Activated B cell treated with CpG ODN at 0.5 μM for 24 hours (primary cell): ENCODE measurements at regions of chr19 and their contacts with region 1.

Region 1: GRCh38 chr19:769616-770015 is 18.7 kb downstream of the MISP start:
- DNase-seq: no peak
- ATAC-seq: no peak
- H3K4me3 Mint-ChIP-seq: no peak overlapping the region
- H3K27ac Mint-ChIP-seq: no peak overlapping the region
- H3K4me1 Mint-ChIP-seq: peaks cover 3% of the 10 kb centered on the region
- H3K27me3 Mint-ChIP-seq: peaks cover 11% of the 10 kb centered on the region
- CTCF ChIP-seq: no peak

Region 2: DNA sequence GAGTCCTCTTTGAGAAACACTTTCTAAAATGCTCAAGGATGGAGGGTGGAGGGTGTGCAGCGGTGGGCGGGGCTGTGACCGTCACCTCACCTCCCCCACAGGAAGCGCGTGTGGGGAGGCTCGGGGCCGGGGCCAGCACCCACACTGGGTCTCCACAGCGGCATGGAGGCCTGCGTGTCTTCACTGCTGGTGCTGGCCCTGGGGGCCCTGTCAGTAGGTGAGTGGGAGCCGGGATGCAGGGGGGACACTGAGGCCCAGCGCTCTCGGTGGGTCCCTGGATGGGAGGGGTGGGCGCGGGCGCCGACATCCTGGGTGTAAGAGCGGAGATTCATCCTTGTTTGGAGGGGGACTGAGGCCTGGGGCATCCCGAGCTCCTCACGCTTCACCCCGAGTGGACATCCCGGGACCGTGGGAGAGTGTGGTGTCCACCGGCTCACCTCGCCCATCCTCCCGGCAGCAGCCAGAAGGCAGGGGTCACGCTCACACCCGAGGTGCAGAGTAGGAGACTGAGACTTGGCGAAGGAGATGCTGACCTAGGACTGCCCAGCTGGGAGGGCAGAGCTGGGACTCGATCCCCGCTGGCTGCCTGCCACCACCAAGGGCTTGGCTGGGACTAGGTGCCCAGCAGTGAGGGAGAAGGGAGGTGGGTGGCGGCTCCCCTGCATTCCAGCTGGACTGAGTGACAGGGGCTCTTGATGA is 225.6 kb before region 1 on chr19 and contains the start of gene GZMM:
- CTCF ChIA-PET with region 1: no interaction called
- POLR2A ChIA-PET with region 1: no interaction called
- intact Hi-C with region 1: no loop called
- DNase-seq: no peak
- ATAC-seq: no peak
- H3K4me3 Mint-ChIP-seq: no peak within 1 kb of the TSS
- H3K27ac Mint-ChIP-seq: no peak within 1 kb of the TSS
- H3K4me1 Mint-ChIP-seq: peaks cover 4% of the 10 kb centered on the region
- H3K27me3 Mint-ChIP-seq: no peaks in the 10 kb centered on the region
- CTCF ChIP-seq: no peak
- total RNA-seq, gene GZMM: 0.22 TPM in 1 of 2 replicates, not detected in the other

Region 3: GRCh38 chr19:718991-719512 is 50.6 kb before region 1 on chr19:
- CTCF ChIA-PET with region 1: no interaction called
- POLR2A ChIA-PET with region 1: no interaction called
- intact Hi-C with region 1: no loop called
- DNase-seq: no peak
- ATAC-seq: no peak
- H3K4me3 Mint-ChIP-seq: no peak overlapping the region
- H3K27ac Mint-ChIP-seq: no peak overlapping the region
- H3K4me1 Mint-ChIP-seq: peaks cover 10% of the 10 kb centered on the region
- H3K27me3 Mint-ChIP-seq: peaks cover 22% of the 10 kb centered on the region
- CTCF ChIP-seq: no peak

Region 4: GRCh38 chr19:913080-913748 is 143.6 kb after region 1 on chr19 and contains the start of gene R3HDM4:
- CTCF ChIA-PET with region 1: no interaction called
- POLR2A ChIA-PET with region 1: interaction called, 14 read pairs
- intact Hi-C with region 1: no loop called
- DNase-seq: peak; percentile 85
- ATAC-seq: peak; percentile 50
- H3K4me3 Mint-ChIP-seq: peak within 1 kb of the TSS; percentile 89
- H3K27ac Mint-ChIP-seq: peak within 1 kb of the TSS; percentile 86
- H3K4me1 Mint-ChIP-seq: peaks cover 36% of the 10 kb centered on the region
- H3K27me3 Mint-ChIP-seq: no peaks in the 10 kb centered on the region
- CTCF ChIP-seq: no peak
- total RNA-seq, gene R3HDM4: 174 and 189 TPM in 2 replicates

Region 5: DNA sequence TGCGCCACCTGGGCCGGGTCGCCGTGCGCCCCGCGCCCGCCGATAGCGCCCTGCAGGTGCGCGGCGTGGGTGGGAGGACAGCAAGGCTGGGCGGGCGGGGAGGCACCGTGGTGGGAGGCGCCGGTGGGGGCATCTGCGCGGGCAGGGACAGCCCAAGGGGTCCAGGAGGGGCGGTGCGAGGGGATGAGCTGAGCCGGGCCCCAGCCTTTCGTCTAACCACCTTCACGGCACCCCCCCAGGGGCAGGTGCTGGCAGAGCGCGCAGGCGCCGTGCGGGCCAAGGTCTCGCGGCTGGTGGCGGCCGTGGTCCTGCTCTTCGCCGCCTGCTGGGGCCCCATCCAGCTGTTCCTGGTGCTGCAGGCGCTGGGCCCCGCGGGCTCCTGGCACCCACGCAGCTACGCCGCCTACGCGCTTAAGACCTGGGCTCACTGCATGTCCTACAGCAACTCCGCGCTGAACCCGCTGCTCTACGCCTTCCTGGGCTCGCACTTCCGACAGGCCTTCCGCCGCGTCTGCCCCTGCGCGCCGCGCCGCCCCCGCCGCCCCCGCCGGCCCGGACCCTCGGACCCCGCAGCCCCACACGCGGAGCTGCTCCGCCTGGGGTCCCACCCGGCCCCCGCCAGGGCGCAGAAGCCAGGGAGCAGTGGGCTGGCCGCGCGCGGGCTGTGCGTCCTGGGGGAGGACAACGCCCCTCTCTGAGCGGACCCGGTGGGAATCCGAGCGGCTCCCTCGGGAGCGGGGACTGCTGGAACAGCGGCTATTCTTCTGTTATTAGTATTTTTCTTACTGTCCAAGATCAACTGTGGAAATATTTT is 150.6 kb after region 1 on chr19:
- CTCF ChIA-PET with region 1: interaction called, 13 read pairs
- POLR2A ChIA-PET with region 1: interaction called, 4 read pairs
- intact Hi-C with region 1: no loop called
- DNase-seq: peak; percentile 70
- ATAC-seq: peak; percentile 38
- H3K4me3 Mint-ChIP-seq: peak overlapping the region; percentile 72
- H3K27ac Mint-ChIP-seq: no peak overlapping the region
- H3K4me1 Mint-ChIP-seq: peaks cover 34% of the 10 kb centered on the region
- H3K27me3 Mint-ChIP-seq: no peaks in the 10 kb centered on the region
- CTCF ChIP-seq: no peak

Region 6: DNA sequence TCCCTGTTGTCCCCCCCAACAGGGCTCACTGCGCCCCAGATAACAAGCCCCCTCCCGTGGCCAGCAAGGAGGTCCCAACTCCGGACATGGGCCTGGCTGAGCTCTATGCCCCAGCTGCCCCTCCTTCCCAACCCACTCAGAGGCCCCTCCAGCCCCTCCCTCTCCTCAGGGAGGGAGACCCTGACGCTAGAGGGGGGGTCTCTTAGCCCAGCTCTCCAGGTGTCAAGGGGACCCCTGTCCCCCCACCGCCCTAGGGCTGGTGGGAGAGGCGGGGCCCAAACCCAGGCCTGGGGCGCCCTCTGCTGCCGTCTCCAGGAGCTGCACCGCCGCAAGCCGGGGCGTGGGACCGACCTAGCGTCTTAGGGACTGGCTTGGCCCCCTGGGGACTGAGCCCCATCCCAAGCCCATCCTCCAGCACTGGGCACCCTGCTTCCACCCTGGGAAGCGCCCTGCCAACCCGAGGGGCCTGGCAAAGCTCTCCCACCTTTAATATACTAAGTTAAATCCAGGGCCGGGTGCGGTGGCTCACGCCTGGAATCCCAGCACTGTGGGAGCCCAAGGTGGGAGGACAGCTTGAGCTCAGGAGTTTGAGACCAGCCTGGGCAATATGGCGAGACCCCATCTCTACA is 232.0 kb after region 1 on chr19:
- CTCF ChIA-PET with region 1: interaction called, 4 read pairs
- POLR2A ChIA-PET with region 1: interaction called, 3 read pairs
- intact Hi-C with region 1: loop called (anchors 1 kb)
- DNase-seq: peak; percentile 75
- ATAC-seq: peak; percentile 77
- H3K4me3 Mint-ChIP-seq: no peak overlapping the region
- H3K27ac Mint-ChIP-seq: no peak overlapping the region
- H3K4me1 Mint-ChIP-seq: peaks cover 13% of the 10 kb centered on the region
- H3K27me3 Mint-ChIP-seq: peaks cover 29% of the 10 kb centered on the region
- CTCF ChIP-seq: no peak